PC-9 (cell line): ENCODE measurements at regions of chr1 and their contacts with region 1.

Region 1: DNA sequence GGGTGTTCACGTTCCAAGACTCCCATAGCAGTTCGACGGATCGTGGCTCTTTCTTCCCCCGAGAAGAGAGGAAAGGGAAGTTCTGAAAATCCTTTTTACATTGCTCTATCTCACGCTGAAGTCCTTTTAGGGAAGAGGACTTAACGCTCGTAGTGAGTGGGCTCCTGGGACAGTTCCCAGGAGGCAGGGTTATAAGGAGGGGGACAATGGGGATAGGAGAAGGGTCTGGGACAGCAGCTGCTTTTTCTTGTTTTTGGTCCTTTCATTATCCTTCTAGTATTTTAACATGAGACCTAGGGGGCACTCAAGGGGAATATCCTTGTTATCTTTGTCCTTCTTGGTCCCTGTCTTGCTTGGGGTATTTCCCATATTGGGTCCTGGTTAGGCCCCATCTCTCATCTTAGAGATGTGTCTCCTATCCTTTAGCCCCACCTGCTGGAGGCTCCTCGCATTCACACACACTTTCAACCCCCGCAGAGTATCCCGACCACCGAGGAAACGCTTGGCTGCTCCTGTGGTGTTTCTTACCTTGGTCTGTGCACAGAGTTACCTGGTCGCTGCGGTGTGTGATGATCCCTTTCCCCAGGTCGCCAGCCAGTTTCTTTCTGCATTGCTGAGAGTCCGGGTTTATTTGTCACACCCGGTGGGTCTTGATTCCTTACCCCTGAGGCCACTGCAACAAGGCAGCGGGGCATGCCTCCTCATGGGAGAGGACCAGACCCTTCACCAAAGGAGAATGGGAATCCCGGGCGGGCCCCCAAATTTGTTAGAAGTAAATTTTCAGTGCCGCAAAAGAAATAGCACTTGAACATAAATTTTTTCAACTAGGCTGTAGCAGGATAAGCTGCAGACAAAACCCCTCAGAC is 29.7 kb downstream of the SCCPDH start:
- DNase-seq: peak in 1 of 2 experiments; percentile 54
- H3K4me3 ChIP-seq: no peak overlapping the region
- H3K27ac ChIP-seq: no peak overlapping the region
- H3K4me1 ChIP-seq: no peaks in the 10 kb centered on the region
- H3K27me3 ChIP-seq: no peaks in the 10 kb centered on the region
- CTCF ChIP-seq: peak; percentile 82

Region 2: DNA sequence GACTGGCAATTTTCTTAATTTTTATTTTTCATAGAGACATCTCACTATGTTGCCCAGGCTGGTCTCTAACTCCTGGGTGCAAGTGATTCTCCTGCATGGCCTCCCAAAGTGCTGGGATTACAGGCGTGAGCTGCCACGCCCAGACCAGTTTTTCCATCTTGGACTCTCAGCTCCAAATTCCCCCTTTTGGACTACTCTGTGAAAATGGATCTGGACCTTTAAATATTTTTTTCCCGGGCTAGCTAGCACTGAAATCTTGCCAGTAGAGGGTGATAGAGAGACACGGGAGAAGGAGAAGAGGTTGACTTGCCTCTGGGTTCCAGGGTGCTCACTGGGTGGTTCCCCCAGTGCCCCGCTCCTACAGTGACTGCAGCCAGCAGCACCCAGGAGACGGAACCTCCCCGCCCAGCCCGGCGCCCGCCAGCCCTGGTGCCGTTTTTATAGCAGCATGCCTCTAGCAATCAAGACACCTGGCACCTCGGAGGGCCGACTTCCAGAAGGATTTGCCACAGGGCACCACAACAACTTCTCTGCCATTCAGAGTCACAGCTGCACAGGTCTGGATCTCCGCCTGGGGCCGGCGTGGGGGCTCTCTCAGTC is 64.4 kb before region 1 on chr1:
- CTCF ChIA-PET with region 1: no interaction called
- POLR2A ChIA-PET with region 1: no interaction called
- intact Hi-C with region 1: loop called (anchors 1 kb)
- DNase-seq: peak; percentile 61
- H3K4me3 ChIP-seq: peak overlapping the region; percentile 54; the same call in 1 of the 2 replicates
- H3K27ac ChIP-seq: no peak overlapping the region
- H3K4me1 ChIP-seq: 0 out of 2 replicates have a peak, but pooled peaks cover 3% of the 10 kb centered on the region
- H3K27me3 ChIP-seq: no peaks in the 10 kb centered on the region
- CTCF ChIP-seq: peak; percentile 79

Region 3: DNA sequence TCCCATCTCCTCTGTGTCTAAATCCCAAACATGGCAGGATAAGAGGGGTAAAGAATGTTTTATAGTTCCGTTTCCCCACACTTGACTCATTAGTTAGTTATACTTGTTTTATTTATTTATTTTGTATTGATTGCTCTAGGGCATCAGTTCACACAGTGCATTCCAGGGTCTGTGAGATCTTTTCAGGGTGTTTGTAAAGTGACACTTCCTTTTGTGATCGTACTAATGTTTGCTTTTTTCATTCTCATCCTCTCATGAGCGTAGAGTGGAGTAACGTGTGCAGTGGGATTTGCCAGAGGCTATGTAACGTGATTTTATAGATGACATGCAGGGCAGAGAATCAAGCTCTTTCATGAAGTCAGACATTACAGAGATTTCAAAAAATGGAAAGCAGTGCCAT is 73.5 kb after region 1 on chr1:
- CTCF ChIA-PET with region 1: no interaction called
- POLR2A ChIA-PET with region 1: no interaction called
- intact Hi-C with region 1: no loop called
- DNase-seq: peak in 1 of 2 experiments; percentile 80
- H3K4me3 ChIP-seq: no peak overlapping the region
- H3K27ac ChIP-seq: no peak overlapping the region
- H3K4me1 ChIP-seq: peaks cover 6% of the 10 kb centered on the region; the same call in 1 of the 2 replicates
- H3K27me3 ChIP-seq: no peaks in the 10 kb centered on the region
- CTCF ChIP-seq: no peak